AG04449 (cell line): ENCODE measurements at regions of chr10 and their contacts with region 1.

Region 1: GRCh38 chr10:101569838-101570766 is 18.0 kb downstream of the POLL start:
- DNase-seq: no peak
- H3K4me3 ChIP-seq: peak overlapping the region; percentile 72
- CTCF ChIP-seq: peak; percentile 92

Region 2: DNA sequence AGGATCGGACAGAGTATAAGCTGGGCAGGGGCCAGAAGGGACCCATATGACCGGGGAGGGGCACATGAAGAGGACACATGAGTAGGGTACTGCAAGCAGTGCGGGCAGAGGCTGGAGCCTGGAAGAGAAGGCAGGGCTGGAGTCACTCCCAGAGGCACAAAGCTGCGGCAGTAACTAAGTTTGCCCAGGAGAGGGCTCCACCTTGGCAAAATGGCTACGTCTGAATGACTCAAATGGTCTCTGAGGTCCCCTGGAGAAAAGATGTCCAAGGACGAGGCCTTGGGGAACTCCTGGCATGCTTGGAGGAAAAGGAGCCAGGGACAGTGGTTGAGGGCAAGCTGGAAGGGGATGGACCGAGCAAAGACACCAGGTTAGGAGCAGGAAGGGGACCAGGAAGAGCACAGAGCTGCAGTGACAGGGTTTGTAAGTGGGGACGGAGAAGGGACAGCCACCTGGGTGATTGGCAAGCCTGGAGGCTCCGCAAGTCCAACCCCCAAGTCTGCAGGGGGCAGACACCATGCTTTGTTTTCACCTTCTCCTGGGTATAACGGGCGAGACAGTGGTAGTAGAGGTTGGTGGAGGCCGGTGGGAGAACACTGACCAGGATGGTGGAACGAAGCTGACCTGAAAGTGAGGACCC is 297.8 kb before region 1 on chr10:
- CTCF ChIA-PET with region 1: interaction called, 32 read pairs
- POLR2A ChIA-PET with region 1: no interaction called
- DNase-seq: no peak
- H3K4me3 ChIP-seq: no peak overlapping the region
- CTCF ChIP-seq: peak; percentile 82

Region 3: GRCh38 chr10:101536800-101537199 is 33.3 kb before region 1 on chr10:
- CTCF ChIA-PET with region 1: interaction called, 15 read pairs
- POLR2A ChIA-PET with region 1: no interaction called
- DNase-seq: no peak
- H3K4me3 ChIP-seq: no peak overlapping the region
- CTCF ChIP-seq: no peak

Region 4: DNA sequence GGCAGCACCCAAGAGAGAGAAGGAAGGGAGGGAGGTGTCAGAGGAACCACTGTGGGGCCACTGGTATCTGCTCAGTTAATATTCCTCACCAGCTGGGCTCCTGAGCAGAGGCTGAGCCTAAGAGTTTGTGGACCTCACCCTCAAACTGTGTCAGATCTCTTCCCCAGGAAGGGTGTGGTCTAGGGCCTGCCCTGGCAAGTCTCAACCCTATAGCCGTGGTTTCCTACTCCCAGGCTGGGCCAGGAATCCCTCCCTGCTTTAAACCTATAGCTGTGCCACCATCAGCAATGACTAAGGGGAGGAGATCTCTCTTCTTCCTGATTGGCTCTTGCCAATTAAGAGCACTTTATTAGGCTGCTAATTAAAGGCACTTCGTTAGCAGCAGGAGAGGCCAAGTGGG is 11.9 kb before region 1 on chr10:
- CTCF ChIA-PET with region 1: interaction called, 73 read pairs
- POLR2A ChIA-PET with region 1: no interaction called
- DNase-seq: no peak
- H3K4me3 ChIP-seq: no peak overlapping the region
- CTCF ChIP-seq: no peak

Region 5: GRCh38 chr10:101709359-101710058 is 139.4 kb after region 1 on chr10:
- CTCF ChIA-PET with region 1: no interaction called
- POLR2A ChIA-PET with region 1: no interaction called
- DNase-seq: no peak
- H3K4me3 ChIP-seq: no peak overlapping the region
- CTCF ChIP-seq: no peak

Region 6: DNA sequence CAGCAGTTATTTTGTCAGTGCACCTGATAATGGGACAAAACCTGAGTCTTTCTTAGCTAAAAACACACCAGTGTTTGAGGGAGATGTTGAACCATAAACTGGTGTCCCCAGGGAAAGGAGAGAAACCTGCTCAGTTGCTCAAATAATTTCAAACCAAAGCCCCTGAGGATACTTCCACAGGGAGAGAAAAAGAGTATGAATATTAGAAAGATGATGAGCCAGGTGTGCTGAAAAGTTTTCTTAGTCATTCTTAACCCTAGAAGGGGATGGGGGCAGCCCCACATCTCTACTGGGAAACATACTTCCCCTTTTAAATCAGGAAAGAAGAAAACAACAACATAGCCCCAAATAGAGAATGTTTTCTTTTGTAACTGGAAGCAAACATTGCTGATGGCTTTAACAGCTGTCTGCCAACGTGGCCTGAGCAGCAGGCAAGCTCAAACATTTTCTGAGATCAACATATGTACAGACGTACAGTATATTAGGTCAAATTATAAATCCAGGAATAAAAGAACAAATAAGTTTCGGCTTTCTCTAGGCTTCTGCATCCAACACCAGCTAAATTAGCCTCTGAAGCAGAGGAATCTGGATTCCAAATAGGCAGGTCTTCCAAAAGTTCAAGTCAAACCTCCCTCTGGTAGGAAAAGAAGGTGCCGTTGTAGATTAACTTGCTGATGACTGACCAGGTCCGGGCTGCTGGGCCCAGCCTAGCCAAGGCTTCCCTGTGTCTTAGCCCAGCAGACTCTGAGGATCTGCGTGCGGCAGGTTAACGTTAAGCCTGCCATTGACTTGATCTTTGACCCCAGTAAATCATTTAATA is 155.4 kb after region 1 on chr10:
- CTCF ChIA-PET with region 1: no interaction called
- POLR2A ChIA-PET with region 1: no interaction called
- DNase-seq: no peak
- H3K4me3 ChIP-seq: no peak overlapping the region
- CTCF ChIP-seq: no peak

Region 7: GRCh38 chr10:101782811-101783735 is 213.0 kb after region 1 on chr10 and contains the start of gene NPM3:
- CTCF ChIA-PET with region 1: interaction called, 30 read pairs
- POLR2A ChIA-PET with region 1: interaction called, 3 read pairs
- DNase-seq: no peak
- H3K4me3 ChIP-seq: peak within 1 kb of the TSS; percentile 84
- CTCF ChIP-seq: no peak